K562 (cell line): ENCODE measurements at regions of chr19 and their contacts with region 1.

Region 1: DNA sequence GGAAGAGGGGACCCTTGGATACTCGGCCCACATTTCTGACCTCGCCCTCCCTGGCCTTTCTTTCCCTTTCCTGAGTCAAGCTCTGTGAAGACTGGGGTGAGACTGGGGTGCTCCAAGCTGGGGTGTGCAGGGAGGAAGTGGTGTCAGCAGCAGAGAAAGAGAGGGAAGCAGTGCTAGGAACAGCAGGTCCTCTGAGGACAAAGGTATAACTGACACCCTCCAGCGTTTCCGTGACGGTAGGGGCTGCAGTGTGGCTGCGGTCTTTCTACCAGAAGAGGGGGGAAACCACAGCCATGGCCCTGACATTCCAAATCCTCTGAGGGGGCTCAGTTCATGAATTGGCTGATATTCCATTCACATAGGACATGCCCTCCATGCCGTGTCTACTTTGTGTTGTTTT is 1.1 kb downstream of the KIR3DL2 start:
- DNase-seq: no peak
- ATAC-seq: no peak
- H3K4me3 ChIP-seq: no peak overlapping the region
- H3K27ac ChIP-seq: no peak overlapping the region
- H3K4me1 ChIP-seq: no peaks in the 10 kb centered on the region; a peak in 1 of 5 replicates
- H3K27me3 ChIP-seq: peaks cover 0 to 17% of the 10 kb centered on the region in 2 experiments; a peak in 3 of 5 replicates
- CTCF ChIP-seq: no peak
- EP300 ChIP-seq: no peak
- POLR2A ChIP-seq: no peak
- RAD21 ChIP-seq: no peak

Region 2: DNA sequence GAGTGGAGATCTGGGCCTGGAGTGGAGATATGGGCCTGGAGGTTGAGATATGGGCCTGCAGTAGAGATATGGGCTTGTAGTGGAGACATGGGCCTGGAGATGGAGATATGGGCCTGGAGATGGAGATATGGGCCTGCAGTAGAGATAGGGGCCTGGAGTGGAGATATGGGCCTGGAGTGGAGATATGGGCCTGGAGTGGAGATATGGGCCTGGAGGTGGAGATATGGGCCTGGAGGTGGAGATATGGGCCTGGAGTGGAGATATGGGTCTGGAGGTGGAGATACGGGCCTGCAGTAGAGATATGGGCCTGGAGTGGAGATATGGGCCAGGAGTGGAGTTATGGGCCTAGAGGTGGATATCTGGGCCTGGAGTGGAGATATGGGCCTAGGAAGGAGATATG is 112.6 kb before region 1 on chr19:
- CTCF ChIA-PET with region 1: no interaction called
- POLR2A ChIA-PET with region 1: no interaction called
- in situ Hi-C with region 1: loop called (anchors 5 kb)
- intact Hi-C with region 1: no loop called
- DNase-seq: no peak
- ATAC-seq: no peak
- H3K4me3 ChIP-seq: no peak overlapping the region
- H3K27ac ChIP-seq: no peak overlapping the region
- H3K4me1 ChIP-seq: no peaks in the 10 kb centered on the region
- H3K27me3 ChIP-seq: no peaks in the 10 kb centered on the region; a peak in 1 of 5 replicates
- CTCF ChIP-seq: no peak
- EP300 ChIP-seq: no peak
- POLR2A ChIP-seq: no peak
- RAD21 ChIP-seq: no peak

Region 3: DNA sequence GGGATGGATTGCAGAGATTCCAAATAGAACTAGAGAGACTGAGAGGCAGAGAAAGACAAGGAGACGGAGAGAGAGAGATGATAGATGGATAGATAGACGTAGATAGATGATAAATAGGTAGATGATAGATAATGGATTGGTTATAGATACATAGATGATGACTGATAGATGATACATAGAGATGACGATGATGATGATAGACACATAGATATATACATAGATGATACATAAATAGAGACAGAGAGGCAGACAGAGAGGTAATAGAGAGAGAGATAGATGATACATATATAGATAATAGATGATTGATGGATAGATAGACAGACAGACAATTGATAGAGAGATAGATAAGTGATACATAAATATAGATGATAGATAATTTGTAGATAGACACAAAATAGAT is 30.5 kb before region 1 on chr19:
- CTCF ChIA-PET with region 1: no interaction called
- POLR2A ChIA-PET with region 1: no interaction called
- in situ Hi-C with region 1: loop called (anchors 5 kb)
- intact Hi-C with region 1: loop called (anchors 5 kb)
- DNase-seq: no peak
- ATAC-seq: no peak
- H3K4me3 ChIP-seq: no peak overlapping the region
- H3K27ac ChIP-seq: no peak overlapping the region
- H3K4me1 ChIP-seq: no peaks in the 10 kb centered on the region; a peak in 1 of 5 replicates
- H3K27me3 ChIP-seq: peaks cover 0 to 11% of the 10 kb centered on the region in 2 experiments; a peak in 1 of 5 replicates
- CTCF ChIP-seq: no peak
- EP300 ChIP-seq: no peak
- POLR2A ChIP-seq: no peak
- RAD21 ChIP-seq: no peak